Calu3 (cell line): ENCODE measurements at regions of chr6 and their contacts with region 1.

Region 1: GRCh38 chr6:125314019-125314581 is 12.3 kb upstream of the HDDC2 start:
- DNase-seq: peak; percentile 57
- H3K4me3 Mint-ChIP-seq: no peak overlapping the region
- H3K27ac Mint-ChIP-seq: no peak overlapping the region
- H3K4me1 Mint-ChIP-seq: no peaks in the 10 kb centered on the region
- H3K27me3 Mint-ChIP-seq: no peaks in the 10 kb centered on the region
- CTCF ChIP-seq: no peak

Region 2: GRCh38 chr6:125153391-125154117 is 160.5 kb before region 1 on chr6 and contains the start of gene TPD52L1:
- CTCF ChIA-PET with region 1: no interaction called
- intact Hi-C with region 1: loop called (anchors 5 kb)
- DNase-seq: peak; percentile 82
- H3K4me3 Mint-ChIP-seq: peak within 1 kb of the TSS; percentile 77
- H3K27ac Mint-ChIP-seq: peak within 1 kb of the TSS; percentile 36
- H3K4me1 Mint-ChIP-seq: no peaks in the 10 kb centered on the region
- H3K27me3 Mint-ChIP-seq: no peaks in the 10 kb centered on the region
- CTCF ChIP-seq: peak; percentile 70
- total RNA-seq, gene TPD52L1: 37.5 and 50.6 TPM in 2 replicates

Region 3: GRCh38 chr6:125753218-125753936 is 439.3 kb after region 1 on chr6:
- CTCF ChIA-PET with region 1: interaction called, 5 read pairs
- intact Hi-C with region 1: loop called (anchors 1 kb)
- DNase-seq: no peak
- H3K4me3 Mint-ChIP-seq: no peak overlapping the region
- H3K27ac Mint-ChIP-seq: no peak overlapping the region
- H3K4me1 Mint-ChIP-seq: peaks cover 17% of the 10 kb centered on the region
- H3K27me3 Mint-ChIP-seq: peaks cover 31% of the 10 kb centered on the region
- CTCF ChIP-seq: no peak

Region 4: DNA sequence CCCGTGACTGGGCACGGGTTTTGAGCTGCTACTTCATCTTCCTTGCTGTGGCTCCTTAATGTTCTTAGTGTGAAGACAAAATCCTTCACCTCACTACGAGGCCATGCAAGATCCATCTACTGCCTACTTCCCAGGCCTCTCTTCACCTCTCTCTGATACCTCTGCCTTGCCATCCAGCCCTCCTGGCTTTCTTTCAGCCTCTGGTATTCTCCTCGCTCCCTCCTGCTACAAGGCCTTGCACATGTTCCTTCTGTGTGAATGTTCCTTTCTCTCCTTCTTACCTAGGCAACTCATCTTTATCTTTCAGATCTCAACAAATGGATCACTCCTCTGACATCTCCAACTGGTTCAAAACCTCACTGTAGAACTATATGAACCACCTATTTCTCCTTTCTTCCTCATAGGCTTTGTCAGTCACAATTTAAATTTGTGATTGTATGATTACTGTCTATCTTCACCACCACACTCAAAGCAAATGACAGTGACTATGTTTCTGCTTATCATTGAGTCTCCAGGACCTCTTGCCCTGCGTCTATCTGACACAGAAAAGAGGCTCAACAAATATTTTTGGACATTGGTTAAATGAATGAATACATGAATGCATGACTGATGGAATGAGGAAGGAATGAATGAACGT is 455.2 kb after region 1 on chr6:
- CTCF ChIA-PET with region 1: interaction called, 3 read pairs
- intact Hi-C with region 1: loop called (anchors 1 kb)
- DNase-seq: no peak
- H3K4me3 Mint-ChIP-seq: no peak overlapping the region
- H3K27ac Mint-ChIP-seq: no peak overlapping the region
- H3K4me1 Mint-ChIP-seq: no peaks in the 10 kb centered on the region
- H3K27me3 Mint-ChIP-seq: peaks cover 7% of the 10 kb centered on the region
- CTCF ChIP-seq: no peak

Region 5: DNA sequence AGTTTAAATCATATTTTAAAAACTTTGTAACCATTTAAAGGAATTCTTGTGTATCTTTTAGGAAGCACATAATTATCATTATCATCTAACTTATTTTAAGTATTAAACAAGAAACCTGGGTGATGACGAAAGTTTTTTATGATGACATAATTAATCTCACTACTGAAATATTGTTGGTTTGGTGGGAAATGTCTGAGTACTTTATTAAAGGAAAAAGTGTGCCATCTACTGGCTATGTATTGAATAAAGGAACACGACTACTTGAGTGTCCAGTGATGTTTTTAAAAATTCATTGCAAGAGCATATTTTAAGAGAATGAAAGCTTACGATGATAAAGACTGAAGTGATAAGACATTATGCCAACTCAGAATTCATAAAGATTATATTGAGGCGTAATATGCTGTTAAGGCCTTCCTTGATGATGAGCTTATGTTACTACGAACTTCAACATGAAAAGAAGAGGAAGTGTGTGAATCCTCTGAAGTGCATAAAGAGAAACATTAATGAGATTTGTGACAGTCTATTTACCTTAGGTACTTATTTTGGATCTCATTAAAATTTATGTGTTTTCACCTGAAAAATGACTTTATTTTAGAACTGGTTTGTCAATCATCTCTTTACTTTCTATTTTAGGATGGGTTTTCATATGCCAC is 660.2 kb after region 1 on chr6:
- CTCF ChIA-PET with region 1: no interaction called
- intact Hi-C with region 1: loop called (anchors 10 kb)
- DNase-seq: no peak
- H3K4me3 Mint-ChIP-seq: no peak overlapping the region
- H3K27ac Mint-ChIP-seq: no peak overlapping the region
- H3K4me1 Mint-ChIP-seq: no peaks in the 10 kb centered on the region
- H3K27me3 Mint-ChIP-seq: no peaks in the 10 kb centered on the region
- CTCF ChIP-seq: no peak